Activated CD4-positive, alpha-beta memory T cell treated with anti-CD3 and anti-CD28 coated beads, Interleukin-2, amount 10 ng/mL, durations not matched to agents 7 days and 5 days (primary cell): ENCODE measurements at regions of chr11 and their contacts with region 1.

Region 1: DNA sequence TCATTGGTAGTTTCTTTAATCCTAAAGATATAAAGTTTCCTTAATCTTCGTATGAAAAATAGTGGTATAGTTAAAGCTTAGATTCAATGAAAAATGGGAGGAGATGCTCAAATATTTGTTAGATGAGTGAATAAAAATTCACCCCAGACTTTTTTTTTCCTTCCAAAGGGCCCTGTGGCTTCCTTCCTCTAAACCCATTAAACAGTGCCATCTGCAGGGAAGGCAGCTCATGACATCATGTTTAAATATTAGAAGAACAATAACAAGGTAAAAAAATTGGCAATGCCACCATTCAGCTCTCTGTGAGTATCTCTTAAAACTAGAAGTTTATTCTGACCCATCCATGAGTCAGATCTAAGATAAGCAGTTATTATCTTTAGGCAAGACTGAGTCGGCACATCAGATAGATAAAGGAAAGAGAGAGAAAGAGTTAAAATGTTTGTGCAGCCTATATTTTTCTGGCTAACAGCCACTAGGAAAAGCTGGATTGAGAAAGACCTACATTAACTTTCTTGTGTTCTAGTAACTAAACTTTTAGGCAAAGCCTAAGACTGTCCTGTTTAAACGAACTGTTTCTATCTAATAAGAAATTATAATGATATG is 19.1 kb upstream of the OOSP1 start:
- DNase-seq: peak; percentile 52
- H3K4me3 Mint-ChIP-seq: no peak overlapping the region
- H3K27ac Mint-ChIP-seq: no peak overlapping the region
- H3K4me1 Mint-ChIP-seq: peaks cover 6% of the 10 kb centered on the region
- H3K27me3 Mint-ChIP-seq: no peaks in the 10 kb centered on the region

Region 2: DNA sequence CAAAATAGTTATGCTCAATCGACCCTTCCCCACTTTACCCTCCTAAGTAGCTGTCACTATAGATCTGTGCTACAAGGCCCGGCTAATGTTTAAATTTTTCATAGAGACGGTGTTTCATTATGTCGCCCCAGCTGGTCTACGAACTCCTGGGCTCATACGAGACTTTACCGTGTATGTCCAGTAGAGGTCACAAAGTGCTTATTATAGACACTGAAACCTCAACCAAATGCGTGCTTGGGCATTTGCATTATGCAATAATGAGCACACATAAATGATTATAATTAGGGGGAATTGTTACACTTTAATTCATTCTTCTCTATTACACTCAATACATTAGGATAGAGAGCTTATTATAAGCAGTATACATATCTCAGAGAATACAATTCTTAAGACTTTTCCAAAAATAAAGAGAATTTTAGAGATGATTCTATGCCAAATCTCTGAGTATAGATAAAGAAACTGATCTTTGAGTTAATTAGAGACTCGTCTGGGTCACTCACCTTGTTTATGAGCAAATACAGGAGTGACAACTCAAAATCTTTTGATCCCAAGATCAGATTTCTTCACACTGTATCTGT is 96.0 kb before region 1 on chr11:
- CTCF ChIA-PET with region 1: interaction called, 22 read pairs
- POLR2A ChIA-PET with region 1: no interaction called
- DNase-seq: peak; percentile 47
- H3K4me3 Mint-ChIP-seq: no peak overlapping the region
- H3K27ac Mint-ChIP-seq: no peak overlapping the region
- H3K4me1 Mint-ChIP-seq: peaks cover 16% of the 10 kb centered on the region
- H3K27me3 Mint-ChIP-seq: no peaks in the 10 kb centered on the region

Region 3: GRCh38 chr11:59878482-59878881 is 40.6 kb before region 1 on chr11 and contains the start of gene OOSP3:
- CTCF ChIA-PET with region 1: no interaction called
- POLR2A ChIA-PET with region 1: no interaction called
- DNase-seq: no peak
- H3K4me3 Mint-ChIP-seq: no peak within 1 kb of the TSS
- H3K27ac Mint-ChIP-seq: no peak within 1 kb of the TSS
- H3K4me1 Mint-ChIP-seq: no peaks in the 10 kb centered on the region
- H3K27me3 Mint-ChIP-seq: peaks cover 9% of the 10 kb centered on the region
- total RNA-seq, gene OOSP3: not detected